ENCODE measurements at regions of chr3 and their contacts with region 1.

Region 1: GRCh38 chr3:46368569-46368968 is 2.2 kb upstream of the CCR5 start:
- DNase-seq: peak; percentile 70
- ATAC-seq: peak; percentile 89
- H3K4me3 ChIP-seq: no peak overlapping the region
- H3K27ac ChIP-seq: no peak overlapping the region
- H3K4me1 ChIP-seq: peaks cover 14% of the 10 kb centered on the region
- H3K27me3 ChIP-seq: no peaks in the 10 kb centered on the region
- CTCF ChIP-seq: peak; percentile 64 to 74 (median 72)
- EP300 ChIP-seq: no peak
- POLR2A ChIP-seq: no peak
- RAD21 ChIP-seq: peak; percentile 87

Region 2: GRCh38 chr3:45938864-45939263 is 429.7 kb before region 1 on chr3:
- CTCF ChIA-PET with region 1: interaction called, 23 read pairs
- POLR2A ChIA-PET with region 1: no interaction called
- RAD21 ChIA-PET with region 1: interaction called, 28 read pairs
- SMC1A ChIA-PET with region 1: interaction called, 10 read pairs
- in situ Hi-C with region 1: no loop called
- intact Hi-C with region 1: no loop called
- DNase-seq: peak; percentile 66
- ATAC-seq: peak; percentile 97
- H3K4me3 ChIP-seq: no peak overlapping the region
- H3K27ac ChIP-seq: no peak overlapping the region
- H3K4me1 ChIP-seq: peaks cover 7% of the 10 kb centered on the region
- H3K27me3 ChIP-seq: no peaks in the 10 kb centered on the region
- CTCF ChIP-seq: peak; percentile 88 to 94 (median 91); a peak in 5 of 6 replicates
- EP300 ChIP-seq: no peak
- POLR2A ChIP-seq: no peak
- RAD21 ChIP-seq: peak; percentile 94

Region 3: DNA sequence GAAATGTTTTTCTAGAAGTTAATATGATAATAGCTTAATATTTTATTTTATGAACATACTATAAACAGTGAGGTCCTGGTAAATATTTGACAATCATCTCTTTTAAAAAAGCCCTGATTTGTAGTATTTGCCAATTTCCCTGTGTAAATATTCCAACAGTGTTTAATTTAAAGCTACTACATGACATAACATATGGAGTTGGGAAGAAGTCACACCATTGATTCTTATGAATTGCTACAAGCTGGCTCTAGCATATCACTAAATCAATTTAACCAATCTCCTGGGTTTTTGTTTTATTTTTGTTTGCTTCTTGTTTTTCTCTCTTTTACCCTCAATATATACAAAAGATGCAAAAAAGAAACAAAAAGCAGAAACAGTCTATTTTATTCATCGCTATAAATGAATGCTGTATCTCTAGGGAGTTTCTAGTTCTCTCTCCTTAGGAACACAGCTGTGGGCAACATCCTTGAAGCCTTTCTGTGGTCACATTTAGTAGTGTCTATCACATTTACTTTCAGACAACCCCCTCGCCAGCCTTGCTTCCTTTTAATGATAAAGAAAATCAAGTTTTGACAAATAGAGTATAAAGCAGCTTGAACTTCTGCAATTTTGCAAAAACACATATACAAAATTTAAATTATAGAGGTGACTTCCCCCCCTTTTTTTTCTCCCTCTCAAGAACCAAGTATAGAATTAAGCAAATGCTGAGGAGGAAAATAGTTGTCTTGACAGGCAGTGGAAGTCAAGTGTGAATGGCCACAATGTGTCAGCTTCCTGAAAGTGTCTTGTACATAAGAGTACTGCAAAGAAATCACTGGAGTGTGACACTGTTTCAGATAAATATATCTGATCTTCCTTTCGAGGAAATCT is 181.9 kb before region 1 on chr3:
- CTCF ChIA-PET with region 1: interaction called, 15 read pairs
- POLR2A ChIA-PET with region 1: no interaction called
- RAD21 ChIA-PET with region 1: interaction called, 13 read pairs
- SMC1A ChIA-PET with region 1: interaction called, 14 read pairs
- in situ Hi-C with region 1: no loop called
- intact Hi-C with region 1: loop called (anchors 1 kb)
- DNase-seq: peak; percentile 87
- ATAC-seq: peak; percentile 94
- H3K4me3 ChIP-seq: 0 out of 2 replicates have a peak overlapping the region, but pooled peaks have one; percentile 6
- H3K27ac ChIP-seq: peak overlapping the region; percentile 71
- H3K4me1 ChIP-seq: peaks cover 33% of the 10 kb centered on the region
- H3K27me3 ChIP-seq: no peaks in the 10 kb centered on the region
- CTCF ChIP-seq: no peak
- EP300 ChIP-seq: peak in 1 of 2 experiments; percentile 54; a peak in 2 of 4 replicates
- POLR2A ChIP-seq: no peak
- RAD21 ChIP-seq: no peak

Region 4: DNA sequence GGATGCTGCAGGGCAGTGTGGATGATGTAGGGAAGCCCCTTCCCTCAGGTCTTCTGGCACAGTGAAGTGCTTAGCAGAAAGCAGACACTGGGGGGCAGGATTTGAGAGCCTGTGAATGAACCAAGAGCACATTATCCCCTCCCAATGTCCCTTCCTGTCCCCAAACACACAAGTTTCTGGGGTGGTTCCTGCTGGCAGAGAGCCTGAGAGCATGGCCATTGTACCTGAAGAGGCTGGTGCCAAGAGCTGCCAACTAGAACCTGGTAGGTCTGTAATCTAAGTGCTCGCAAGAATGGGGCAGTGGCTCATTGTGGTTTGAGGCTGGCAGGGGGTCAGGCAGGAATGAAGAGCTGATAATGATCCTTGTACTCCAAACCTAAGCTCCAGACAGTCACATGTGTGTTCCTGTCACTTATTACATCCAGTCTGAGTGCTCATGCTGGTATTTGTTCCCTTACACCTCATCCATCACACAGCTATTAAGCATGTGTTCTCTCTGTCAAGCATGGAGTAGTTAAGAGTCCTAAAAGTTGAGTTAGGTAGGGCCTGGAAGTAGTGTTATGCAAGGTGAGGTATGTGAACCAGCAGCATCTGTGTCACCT is 153.7 kb before region 1 on chr3:
- CTCF ChIA-PET with region 1: interaction called, 555 read pairs
- POLR2A ChIA-PET with region 1: interaction called, 16 read pairs
- RAD21 ChIA-PET with region 1: interaction called, 421 read pairs
- SMC1A ChIA-PET with region 1: interaction called, 434 read pairs
- in situ Hi-C with region 1: loop called (anchors 5 kb)
- intact Hi-C with region 1: loop called (anchors 1 kb)
- DNase-seq: no peak
- ATAC-seq: peak; percentile 85
- H3K4me3 ChIP-seq: no peak overlapping the region
- H3K27ac ChIP-seq: no peak overlapping the region
- H3K4me1 ChIP-seq: peaks cover 31% of the 10 kb centered on the region
- H3K27me3 ChIP-seq: peaks cover 0 to 5% of the 10 kb centered on the region in 2 experiments; a peak in 1 of 4 replicates
- CTCF ChIP-seq: peak; percentile 44 to 64 (median 61); a peak in 5 of 6 replicates
- EP300 ChIP-seq: no peak
- POLR2A ChIP-seq: no peak
- RAD21 ChIP-seq: peak; percentile 69

Region 5: DNA sequence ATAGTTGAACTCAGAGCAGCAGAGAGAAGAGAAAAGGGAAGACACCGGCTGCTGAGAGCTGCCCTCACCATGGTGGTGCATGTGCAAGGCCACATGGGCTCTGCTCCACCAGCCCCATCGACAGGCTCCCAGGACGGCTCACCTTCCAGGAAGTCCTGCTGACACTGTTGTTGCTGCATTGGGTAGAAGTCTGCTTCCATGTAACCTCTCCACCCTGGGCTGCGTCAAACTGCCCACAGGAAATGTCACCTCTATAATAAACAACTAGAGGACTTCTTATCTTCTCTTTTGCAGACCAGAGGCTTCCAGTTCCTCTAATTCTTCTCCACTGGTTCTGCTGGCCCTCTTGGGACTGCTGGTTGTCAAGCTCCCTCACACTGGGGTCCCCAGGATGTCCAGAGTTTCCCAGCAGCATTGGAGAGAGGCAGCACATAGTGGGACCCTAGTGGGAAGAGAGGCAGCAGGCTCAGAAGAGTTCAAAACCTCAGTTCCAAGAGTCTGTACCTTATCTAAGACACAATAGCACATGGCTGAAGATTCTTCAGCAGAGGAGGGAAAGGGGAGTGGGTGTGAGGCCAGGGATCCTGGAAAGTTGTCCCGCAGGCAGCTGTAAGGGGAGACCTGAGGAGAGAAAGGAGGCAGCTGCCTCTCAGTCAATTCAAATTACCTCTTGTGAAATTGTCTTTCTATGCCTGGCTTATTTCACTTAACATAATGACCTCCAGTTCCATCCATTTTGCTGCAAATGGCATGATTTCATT is 132.1 kb before region 1 on chr3:
- CTCF ChIA-PET with region 1: interaction called, 14 read pairs
- POLR2A ChIA-PET with region 1: no interaction called
- RAD21 ChIA-PET with region 1: interaction called, 12 read pairs
- SMC1A ChIA-PET with region 1: interaction called, 10 read pairs
- in situ Hi-C with region 1: no loop called
- intact Hi-C with region 1: no loop called
- DNase-seq: no peak
- ATAC-seq: peak; percentile 29
- H3K4me3 ChIP-seq: no peak overlapping the region
- H3K27ac ChIP-seq: no peak overlapping the region
- H3K4me1 ChIP-seq: no peaks in the 10 kb centered on the region; the same call in 1 of the 2 replicates
- H3K27me3 ChIP-seq: peaks cover 0 to 9% of the 10 kb centered on the region in 2 experiments; a peak in 3 of 4 replicates
- CTCF ChIP-seq: no peak
- EP300 ChIP-seq: no peak
- POLR2A ChIP-seq: no peak
- RAD21 ChIP-seq: no peak

Region 6: GRCh38 chr3:46284981-46285683 is 83.4 kb before region 1 on chr3:
- CTCF ChIA-PET with region 1: interaction called, 13 read pairs
- POLR2A ChIA-PET with region 1: no interaction called
- RAD21 ChIA-PET with region 1: interaction called, 7 read pairs
- SMC1A ChIA-PET with region 1: interaction called, 35 read pairs
- in situ Hi-C with region 1: no loop called
- intact Hi-C with region 1: no loop called
- DNase-seq: no peak
- ATAC-seq: no peak
- H3K4me3 ChIP-seq: no peak overlapping the region
- H3K27ac ChIP-seq: no peak overlapping the region
- H3K4me1 ChIP-seq: peaks cover 13% of the 10 kb centered on the region
- H3K27me3 ChIP-seq: no peaks in the 10 kb centered on the region
- CTCF ChIP-seq: no peak
- EP300 ChIP-seq: no peak
- POLR2A ChIP-seq: no peak
- RAD21 ChIP-seq: no peak

Region 7: DNA sequence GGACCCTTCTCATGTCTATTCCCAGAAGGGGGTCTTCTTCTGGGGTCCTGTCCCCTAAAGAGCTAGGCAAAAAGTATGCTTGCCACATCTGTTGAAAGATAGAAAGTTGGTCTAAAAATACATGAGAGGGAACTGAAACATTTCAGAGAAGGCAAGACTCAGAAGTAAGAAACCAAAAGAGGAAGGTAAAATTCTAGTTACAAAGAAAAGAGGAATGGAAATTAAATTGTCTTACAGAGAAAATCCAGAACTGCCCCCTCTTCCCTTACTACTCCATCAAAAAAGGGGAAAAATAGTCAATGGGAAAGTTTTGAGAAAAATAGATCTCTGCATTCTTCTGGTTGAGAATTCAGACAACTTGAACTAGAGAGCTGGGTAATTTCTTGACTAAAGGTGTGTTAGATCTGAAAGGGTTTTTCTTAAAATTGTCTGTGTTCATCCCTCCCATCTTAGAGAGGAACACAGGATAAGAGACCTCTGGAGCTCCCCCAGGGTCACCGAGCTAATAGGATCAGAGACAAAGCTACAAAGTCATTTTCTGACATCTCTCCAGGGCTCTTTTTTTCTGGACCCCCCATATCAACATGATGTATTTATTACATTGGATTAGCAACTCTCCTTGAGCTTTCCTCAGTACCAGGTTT is 47.0 kb before region 1 on chr3:
- CTCF ChIA-PET with region 1: interaction called, 18 read pairs
- POLR2A ChIA-PET with region 1: interaction called, 5 read pairs
- RAD21 ChIA-PET with region 1: interaction called, 27 read pairs
- SMC1A ChIA-PET with region 1: interaction called, 41 read pairs
- in situ Hi-C with region 1: no loop called
- intact Hi-C with region 1: no loop called
- DNase-seq: no peak
- ATAC-seq: peak; percentile 85
- H3K4me3 ChIP-seq: peak overlapping the region; percentile 64; the same call in 1 of the 2 replicates
- H3K27ac ChIP-seq: peak overlapping the region; percentile 59
- H3K4me1 ChIP-seq: peaks cover 17% of the 10 kb centered on the region
- H3K27me3 ChIP-seq: no peaks in the 10 kb centered on the region
- CTCF ChIP-seq: no peak
- EP300 ChIP-seq: peak in 1 of 2 experiments; percentile 69; a peak in 2 of 4 replicates
- POLR2A ChIP-seq: no peak
- RAD21 ChIP-seq: no peak

Region 8: DNA sequence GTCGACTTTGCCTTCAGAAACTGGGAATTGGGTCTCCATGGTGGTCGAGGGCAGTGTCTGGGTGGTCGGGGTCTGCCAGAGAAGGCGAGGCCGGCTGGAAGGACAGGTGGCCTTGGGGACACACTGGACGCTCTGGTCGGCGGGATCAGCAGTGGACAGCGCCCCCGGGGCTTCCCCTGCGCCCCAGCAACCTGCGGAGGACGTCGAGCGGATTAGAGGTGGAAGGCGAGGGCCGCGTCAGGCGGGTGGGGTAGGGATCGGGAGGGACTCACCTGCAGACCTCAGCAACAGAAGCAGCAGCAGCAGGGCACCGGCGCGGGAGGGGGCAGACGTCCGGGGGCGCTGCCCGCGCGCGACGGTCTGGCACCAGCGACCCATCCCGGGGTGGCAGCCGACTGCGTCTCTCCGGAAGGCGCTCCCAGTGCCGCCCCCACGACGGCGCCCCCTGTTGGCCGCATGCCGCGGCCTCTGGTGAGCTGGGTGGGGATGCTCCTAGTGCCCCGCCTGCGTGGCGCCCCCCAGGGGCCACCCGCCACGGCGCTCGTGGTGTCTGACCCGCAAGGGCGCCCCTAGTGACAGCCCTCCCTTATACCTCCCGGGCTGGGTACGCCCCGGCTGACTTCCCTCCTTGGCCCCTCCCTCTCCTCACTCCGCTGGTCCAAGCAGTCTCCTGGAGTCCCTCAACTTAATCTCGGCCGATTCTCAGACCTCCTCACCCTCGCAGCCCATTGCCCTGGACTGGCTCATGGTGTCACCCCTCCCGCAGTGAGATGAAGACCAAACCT is 349.1 kb after region 1 on chr3 and contains the start of gene PRSS50:
- CTCF ChIA-PET with region 1: no interaction called
- POLR2A ChIA-PET with region 1: no interaction called
- RAD21 ChIA-PET with region 1: no interaction called
- SMC1A ChIA-PET with region 1: no interaction called
- in situ Hi-C with region 1: no loop called
- intact Hi-C with region 1: no loop called
- DNase-seq: no peak
- ATAC-seq: no peak
- H3K4me3 ChIP-seq: no peak within 1 kb of the TSS
- H3K27ac ChIP-seq: no peak within 1 kb of the TSS
- H3K4me1 ChIP-seq: peaks cover 13% of the 10 kb centered on the region
- H3K27me3 ChIP-seq: no peaks in the 10 kb centered on the region
- CTCF ChIP-seq: peak in 1 of 3 experiments; percentile 42; a peak in 2 of 6 replicates
- EP300 ChIP-seq: no peak
- POLR2A ChIP-seq: no peak
- RAD21 ChIP-seq: no peak
- polyA plus RNA-seq, gene PRSS50: not detected